ENCODE measurements at regions of chr1 and their contacts with region 1.

Region 1: GRCh38 chr1:212062832-212063438 is 27.4 kb downstream of the DTL start:
- DNase-seq: peak; percentile 57
- H3K4me3 ChIP-seq: no peak overlapping the region
- H3K27ac ChIP-seq: no peak overlapping the region
- H3K4me1 ChIP-seq: peaks cover 13% of the 10 kb centered on the region
- H3K27me3 ChIP-seq: no peaks in the 10 kb centered on the region
- CTCF ChIP-seq: peak; percentile 42 to 45
- POLR2A ChIP-seq: no peak

Region 2: GRCh38 chr1:211985556-211986264 is 77.2 kb before region 1 on chr1:
- CTCF ChIA-PET with region 1: no interaction called
- POLR2A ChIA-PET with region 1: no interaction called
- dilution Hi-C with region 1: no loop called
- intact Hi-C with region 1: no loop called
- DNase-seq: no peak
- H3K4me3 ChIP-seq: no peak overlapping the region
- H3K27ac ChIP-seq: no peak overlapping the region
- H3K4me1 ChIP-seq: no peaks in the 10 kb centered on the region
- H3K27me3 ChIP-seq: no peaks in the 10 kb centered on the region
- CTCF ChIP-seq: no peak
- POLR2A ChIP-seq: no peak

Region 3: DNA sequence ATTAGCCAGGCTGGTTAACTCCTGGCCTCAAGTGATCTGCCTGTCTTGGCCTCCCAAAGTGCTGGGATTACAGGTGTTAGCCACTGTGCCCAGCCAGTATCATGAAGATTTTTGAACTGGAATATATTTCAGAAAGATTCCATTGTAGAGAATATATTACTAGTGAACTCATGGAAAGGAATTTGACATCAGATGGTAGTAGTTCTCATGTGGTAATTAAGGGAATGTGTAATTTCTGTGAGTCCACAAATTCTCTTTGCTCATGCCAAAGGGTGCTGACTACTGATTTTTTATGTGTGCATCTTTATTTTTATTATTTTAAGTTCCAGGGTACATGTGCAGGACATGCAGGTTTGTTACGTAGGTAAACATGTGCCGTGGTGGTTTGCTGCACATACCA is 17.0 kb before region 1 on chr1:
- CTCF ChIA-PET with region 1: no interaction called
- POLR2A ChIA-PET with region 1: no interaction called
- dilution Hi-C with region 1: no loop called
- intact Hi-C with region 1: no loop called
- DNase-seq: no peak
- H3K4me3 ChIP-seq: no peak overlapping the region
- H3K27ac ChIP-seq: no peak overlapping the region
- H3K4me1 ChIP-seq: peaks cover under 1% of the 10 kb centered on the region
- H3K27me3 ChIP-seq: no peaks in the 10 kb centered on the region
- CTCF ChIP-seq: no peak
- POLR2A ChIP-seq: no peak

Region 4: DNA sequence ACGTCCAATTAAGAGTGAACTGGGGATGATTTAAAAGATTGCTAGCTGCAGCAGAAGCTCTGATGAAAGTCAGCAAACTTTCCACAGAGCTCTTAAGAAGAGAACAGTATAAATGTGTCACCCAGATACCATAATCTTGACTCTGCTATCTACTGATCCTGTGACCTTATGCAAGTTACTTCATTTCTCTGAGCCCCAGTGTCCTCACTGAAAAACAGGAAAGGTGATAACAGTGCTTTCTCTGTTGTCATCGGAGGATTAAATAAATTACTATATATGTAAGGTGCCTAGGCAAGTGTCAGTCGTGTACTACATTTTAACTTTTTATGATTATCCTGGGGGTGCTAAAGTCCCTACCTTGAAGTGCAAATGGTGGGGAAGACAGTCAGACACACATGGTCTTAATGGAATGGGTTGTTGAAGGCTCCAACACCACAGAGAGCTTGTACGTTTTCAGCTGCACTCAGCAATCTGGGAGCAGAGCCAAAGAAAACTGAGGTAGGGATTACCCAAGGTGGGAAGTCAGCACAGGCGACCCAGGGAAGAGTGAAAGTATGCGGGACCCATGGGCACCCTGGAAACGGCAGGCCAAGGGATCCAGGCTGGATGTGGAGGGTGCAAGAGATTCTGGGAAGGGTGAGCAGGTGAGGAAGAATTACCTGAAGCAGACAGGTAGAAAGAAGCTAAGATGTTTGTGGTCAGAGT is 55.4 kb after region 1 on chr1:
- CTCF ChIA-PET with region 1: no interaction called
- POLR2A ChIA-PET with region 1: no interaction called
- dilution Hi-C with region 1: no loop called
- intact Hi-C with region 1: no loop called
- DNase-seq: peak; percentile 30
- H3K4me3 ChIP-seq: no peak overlapping the region
- H3K27ac ChIP-seq: no peak overlapping the region
- H3K4me1 ChIP-seq: no peaks in the 10 kb centered on the region
- H3K27me3 ChIP-seq: no peaks in the 10 kb centered on the region
- CTCF ChIP-seq: no peak
- POLR2A ChIP-seq: no peak

Region 5: DNA sequence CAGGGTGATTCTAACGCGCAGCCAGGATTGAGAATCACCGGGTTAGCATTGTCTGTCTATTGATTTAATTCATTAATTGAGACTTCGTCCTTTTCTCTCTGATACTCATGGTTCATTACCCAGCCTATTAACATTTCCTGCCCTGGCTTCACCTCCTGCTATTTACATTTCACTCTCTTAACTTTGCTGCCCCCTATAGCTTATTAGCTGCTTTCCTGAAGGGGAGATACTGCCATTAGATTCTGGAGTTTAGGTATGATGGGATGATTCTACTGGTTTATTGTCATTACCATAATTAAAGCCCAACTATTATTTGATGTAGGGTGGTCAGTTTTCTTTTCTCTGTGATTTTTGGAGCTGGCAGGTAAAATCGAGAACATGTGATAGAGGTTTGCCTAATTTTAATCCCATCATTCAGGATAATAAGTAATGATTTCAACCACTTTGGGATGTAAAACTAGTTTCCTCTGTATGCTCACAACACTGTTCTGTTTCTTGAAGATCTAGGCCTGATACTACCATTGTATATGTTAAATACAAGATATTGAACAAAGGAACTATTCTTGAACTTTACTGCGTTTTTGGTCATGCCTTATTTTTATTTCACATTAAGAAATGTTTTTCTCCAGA is 228.7 kb after region 1 on chr1:
- CTCF ChIA-PET with region 1: interaction called, 12 read pairs
- POLR2A ChIA-PET with region 1: no interaction called
- dilution Hi-C with region 1: no loop called
- intact Hi-C with region 1: loop called (anchors 1 kb)
- DNase-seq: peak; percentile 62
- H3K4me3 ChIP-seq: no peak overlapping the region
- H3K27ac ChIP-seq: no peak overlapping the region
- H3K4me1 ChIP-seq: peaks cover 27% of the 10 kb centered on the region
- H3K27me3 ChIP-seq: no peaks in the 10 kb centered on the region
- CTCF ChIP-seq: peak; percentile 53 to 54
- POLR2A ChIP-seq: no peak

Region 6: GRCh38 chr1:212315907-212316306 is 253.0 kb after region 1 on chr1:
- CTCF ChIA-PET with region 1: interaction called, 10 read pairs
- POLR2A ChIA-PET with region 1: no interaction called
- dilution Hi-C with region 1: no loop called
- intact Hi-C with region 1: no loop called
- DNase-seq: peak; percentile 40
- H3K4me3 ChIP-seq: no peak overlapping the region
- H3K27ac ChIP-seq: no peak overlapping the region
- H3K4me1 ChIP-seq: no peaks in the 10 kb centered on the region
- H3K27me3 ChIP-seq: no peaks in the 10 kb centered on the region
- CTCF ChIP-seq: peak in 1 of 2 donors; percentile 1
- POLR2A ChIP-seq: no peak

Region 7: DNA sequence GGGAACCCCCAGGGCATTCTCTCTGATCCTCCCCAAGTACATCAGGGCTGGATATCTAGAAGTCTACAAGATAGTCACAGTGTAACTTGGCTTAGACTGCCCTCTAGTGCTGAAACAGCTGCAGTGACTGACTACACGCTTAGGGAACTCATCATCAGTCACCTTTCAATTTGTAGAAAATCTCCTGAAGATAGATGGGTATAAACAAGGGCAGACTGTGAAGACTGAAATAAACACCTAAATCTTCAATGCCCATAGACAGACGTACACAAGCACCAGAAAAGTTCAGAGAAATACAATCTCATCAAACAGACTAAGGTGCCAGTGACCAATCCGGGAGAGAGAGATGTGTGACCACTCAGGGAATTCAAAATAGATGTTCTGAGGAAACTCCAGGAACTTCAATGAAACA is 305.1 kb after region 1 on chr1:
- CTCF ChIA-PET with region 1: interaction called, 48 read pairs
- POLR2A ChIA-PET with region 1: no interaction called
- dilution Hi-C with region 1: no loop called
- intact Hi-C with region 1: loop called (anchors 1 kb)
- DNase-seq: peak; percentile 68
- H3K4me3 ChIP-seq: no peak overlapping the region
- H3K27ac ChIP-seq: no peak overlapping the region
- H3K4me1 ChIP-seq: no peaks in the 10 kb centered on the region
- H3K27me3 ChIP-seq: no peaks in the 10 kb centered on the region
- CTCF ChIP-seq: peak; percentile 77 to 78
- POLR2A ChIP-seq: no peak

Measured in endothelial cell of umbilical vein (primary cell).